ENCODE measurements at regions of chr2 and their contacts with region 1.

Region 1: GRCh38 chr2:119407430-119408220 is 24.0 kb upstream of the TMEM37 start:
- DNase-seq: no peak
- ATAC-seq: peak; percentile 85 to 95 (median 88)
- H3K4me3 ChIP-seq: no peak overlapping the region
- H3K27ac ChIP-seq: no peak overlapping the region
- H3K4me1 ChIP-seq: peaks cover 6% of the 10 kb centered on the region
- H3K27me3 ChIP-seq: no peaks in the 10 kb centered on the region
- CTCF ChIP-seq: peak; percentile 84

Region 2: DNA sequence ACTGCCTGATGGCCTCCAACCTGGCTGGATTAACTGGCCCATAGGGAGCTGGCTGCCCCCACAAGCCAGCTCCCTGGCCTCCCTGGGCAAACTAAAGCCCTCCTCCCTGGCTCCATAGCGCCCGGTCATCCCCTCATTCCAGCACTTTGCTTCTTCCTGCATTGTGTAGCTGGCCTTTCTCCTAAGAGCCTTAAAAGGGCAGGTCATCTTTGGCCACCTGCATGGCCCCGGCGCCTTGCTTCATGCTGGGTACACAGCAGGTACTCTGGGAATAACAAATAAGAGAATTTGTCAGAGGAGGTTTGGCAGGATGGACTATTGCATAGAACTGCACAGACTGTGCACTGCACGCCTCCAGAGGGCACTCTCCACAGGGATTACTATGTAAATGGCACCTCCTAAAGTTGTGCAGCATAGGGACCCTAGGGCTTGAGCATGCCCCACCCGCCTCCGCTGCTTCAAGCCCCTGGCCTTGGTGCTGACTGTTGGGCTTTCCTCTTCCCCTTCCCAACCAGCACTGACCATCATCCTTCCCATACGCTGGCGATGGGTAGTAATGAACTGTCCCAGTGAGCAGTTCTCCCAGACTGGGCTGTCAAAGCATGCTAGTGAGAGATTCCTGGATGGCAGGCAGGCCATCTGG is 173.1 kb before region 1 on chr2:
- intact Hi-C with region 1: no loop called
- DNase-seq: no peak
- ATAC-seq: peak; percentile 31 to 56 (median 48)
- H3K4me3 ChIP-seq: no peak overlapping the region
- H3K27ac ChIP-seq: peak overlapping the region; percentile 78
- H3K4me1 ChIP-seq: peaks cover 95% of the 10 kb centered on the region
- H3K27me3 ChIP-seq: no peaks in the 10 kb centered on the region
- CTCF ChIP-seq: peak; percentile 21

Region 3: DNA sequence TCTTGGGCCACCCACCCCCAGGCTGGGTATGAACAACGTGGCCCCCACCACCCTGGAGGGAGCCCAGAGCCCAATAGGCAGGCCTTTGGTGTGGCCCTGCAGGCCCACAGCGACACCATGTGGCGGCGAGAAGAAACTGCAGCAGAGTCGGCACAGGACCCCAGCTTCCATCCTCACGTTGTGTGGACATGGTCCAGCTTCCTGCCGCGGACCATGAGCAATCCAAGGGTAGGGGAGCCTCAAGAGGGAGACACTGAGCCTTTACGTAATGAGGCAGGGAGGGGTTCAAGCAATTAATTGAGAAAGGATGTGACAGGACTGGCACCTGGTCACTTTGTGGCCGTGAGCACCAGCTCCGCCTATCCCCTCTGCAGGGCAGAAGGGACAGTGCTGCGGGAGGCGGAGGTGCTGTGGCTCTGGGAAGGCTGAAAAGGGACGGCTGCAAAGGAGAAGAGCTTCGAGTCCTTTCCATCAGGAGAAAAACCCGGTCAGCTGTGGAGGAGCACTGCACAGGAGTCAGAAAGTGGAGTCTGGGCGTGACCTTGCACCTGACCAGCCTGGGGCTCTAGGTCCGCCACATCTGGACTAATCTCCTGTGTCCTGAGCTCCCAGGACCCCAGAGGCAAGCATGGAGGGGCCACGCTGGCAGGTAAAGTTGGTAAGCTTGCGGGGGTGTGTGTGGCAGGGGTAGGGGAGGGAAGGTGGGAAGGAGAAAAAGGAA is 68.8 kb after region 1 on chr2:
- intact Hi-C with region 1: loop called (anchors 1 to 5 kb)
- DNase-seq: peak; percentile 55 to 76
- ATAC-seq: peak; percentile 87 to 94 (median 90)
- H3K4me3 ChIP-seq: no peak overlapping the region
- H3K27ac ChIP-seq: no peak overlapping the region
- H3K4me1 ChIP-seq: peaks cover 8% of the 10 kb centered on the region
- H3K27me3 ChIP-seq: no peaks in the 10 kb centered on the region
- CTCF ChIP-seq: peak; percentile 95

Region 4: GRCh38 chr2:119659601-119660342 is 252.1 kb after region 1 on chr2:
- intact Hi-C with region 1: loop called (anchors 2 kb)
- DNase-seq: peak in 1 of 2 donors; percentile 34
- ATAC-seq: peak in 3 of 4 donors; percentile 56 to 65 (median 60)
- H3K4me3 ChIP-seq: no peak overlapping the region
- H3K27ac ChIP-seq: no peak overlapping the region
- H3K4me1 ChIP-seq: no peaks in the 10 kb centered on the region
- H3K27me3 ChIP-seq: no peaks in the 10 kb centered on the region
- CTCF ChIP-seq: peak; percentile 82

Measured in psoas muscle (tissue), 8 donors.